ENCODE measurements at regions of chr7 and their contacts with region 1.

Region 1: GRCh38 chr7:144835652-144836544 is at the start of gene TPK1:
- DNase-seq: peak; percentile 96
- total RNA-seq, gene TPK1: 5.7 TPM

Region 2: GRCh38 chr7:144738708-144739314 is 97.1 kb before region 1 on chr7:
- intact Hi-C with region 1: loop called (anchors 10 kb)
- DNase-seq: no peak

Region 3: DNA sequence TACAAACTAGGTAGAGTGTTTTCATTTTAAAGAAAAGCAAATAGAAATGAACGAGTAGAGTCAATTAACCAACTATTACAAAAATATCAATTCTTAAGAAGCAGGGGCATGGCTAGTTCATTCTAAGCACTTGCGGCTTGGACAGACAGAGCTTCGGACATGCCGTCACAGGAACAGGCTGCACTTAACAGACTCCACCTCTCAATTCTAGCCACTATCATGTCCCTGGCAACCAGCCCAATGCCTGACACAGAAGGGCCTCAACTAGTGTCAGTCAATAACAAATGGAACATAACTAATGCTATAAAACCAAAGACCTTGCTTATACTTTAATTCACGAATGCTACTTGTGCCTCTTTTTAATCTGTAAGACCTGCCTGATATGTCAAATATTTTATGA is 74.4 kb before region 1 on chr7:
- intact Hi-C with region 1: no loop called
- DNase-seq: no peak

Measured in cardiac septum (tissue), 1 donor.